Activated CD8-positive, alpha-beta memory T cell treated with anti-CD3 and anti-CD28 coated beads, Interleukin-2, amount 10 ng/mL, durations not matched to agents 7 days and 5 days (primary cell): ENCODE measurements at regions of chr17 and their contacts with region 1.

Region 1: DNA sequence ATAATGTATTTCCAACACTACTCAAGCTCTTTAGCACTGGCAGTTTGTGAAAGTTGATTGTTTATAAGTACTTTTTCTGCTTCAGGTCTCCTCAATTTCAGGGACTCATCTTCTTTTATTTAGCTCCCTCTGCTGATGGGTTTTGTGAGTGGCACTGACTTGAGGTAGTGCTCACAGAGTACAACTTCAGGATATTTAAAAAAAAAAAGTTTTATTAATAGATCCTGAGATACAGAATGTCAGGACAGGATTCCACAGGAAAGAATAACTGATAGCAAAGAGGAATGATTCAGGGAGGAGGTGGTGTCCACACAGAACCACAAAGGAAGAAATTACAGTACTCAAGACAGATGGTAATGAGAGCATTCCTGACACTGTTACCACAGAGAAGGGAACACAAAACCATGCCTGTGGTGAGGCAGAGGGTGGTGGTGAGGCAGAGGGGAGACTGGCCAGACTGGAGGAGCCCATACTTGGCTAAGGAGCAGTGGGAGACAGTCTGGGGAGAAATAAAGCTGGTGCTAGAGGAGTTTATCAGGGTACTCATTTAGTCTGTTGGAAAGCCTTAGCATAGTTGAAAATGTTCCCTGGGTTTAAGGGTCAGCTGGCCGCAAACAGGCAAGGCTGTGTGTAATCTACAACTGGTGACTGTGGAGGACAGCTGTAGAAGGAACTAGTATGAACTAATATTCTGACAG is 63.7 kb downstream of the SPAG9 start:
- DNase-seq: peak; percentile 44
- ATAC-seq: peak; percentile 55
- H3K4me3 Mint-ChIP-seq: no peak overlapping the region
- H3K27ac Mint-ChIP-seq: no peak overlapping the region
- H3K4me1 Mint-ChIP-seq: peaks cover 3% of the 10 kb centered on the region
- H3K27me3 Mint-ChIP-seq: no peaks in the 10 kb centered on the region

Region 2: GRCh38 chr17:51000835-51001638 is 55.9 kb before region 1 on chr17:
- CTCF ChIA-PET with region 1: interaction called, 15 read pairs
- DNase-seq: no peak
- ATAC-seq: peak; percentile 76
- H3K4me3 Mint-ChIP-seq: no peak overlapping the region
- H3K27ac Mint-ChIP-seq: peak overlapping the region; percentile 33
- H3K4me1 Mint-ChIP-seq: peaks cover 4% of the 10 kb centered on the region
- H3K27me3 Mint-ChIP-seq: no peaks in the 10 kb centered on the region

Region 3: GRCh38 chr17:51046514-51047384 is 10.2 kb before region 1 on chr17:
- CTCF ChIA-PET with region 1: interaction called, 16 read pairs
- DNase-seq: no peak
- ATAC-seq: no peak
- H3K4me3 Mint-ChIP-seq: no peak overlapping the region
- H3K27ac Mint-ChIP-seq: no peak overlapping the region
- H3K4me1 Mint-ChIP-seq: peaks cover 5% of the 10 kb centered on the region
- H3K27me3 Mint-ChIP-seq: no peaks in the 10 kb centered on the region